SK-N-SH (cell line): ENCODE measurements at regions of chr15 and their contacts with region 1.

Region 1: DNA sequence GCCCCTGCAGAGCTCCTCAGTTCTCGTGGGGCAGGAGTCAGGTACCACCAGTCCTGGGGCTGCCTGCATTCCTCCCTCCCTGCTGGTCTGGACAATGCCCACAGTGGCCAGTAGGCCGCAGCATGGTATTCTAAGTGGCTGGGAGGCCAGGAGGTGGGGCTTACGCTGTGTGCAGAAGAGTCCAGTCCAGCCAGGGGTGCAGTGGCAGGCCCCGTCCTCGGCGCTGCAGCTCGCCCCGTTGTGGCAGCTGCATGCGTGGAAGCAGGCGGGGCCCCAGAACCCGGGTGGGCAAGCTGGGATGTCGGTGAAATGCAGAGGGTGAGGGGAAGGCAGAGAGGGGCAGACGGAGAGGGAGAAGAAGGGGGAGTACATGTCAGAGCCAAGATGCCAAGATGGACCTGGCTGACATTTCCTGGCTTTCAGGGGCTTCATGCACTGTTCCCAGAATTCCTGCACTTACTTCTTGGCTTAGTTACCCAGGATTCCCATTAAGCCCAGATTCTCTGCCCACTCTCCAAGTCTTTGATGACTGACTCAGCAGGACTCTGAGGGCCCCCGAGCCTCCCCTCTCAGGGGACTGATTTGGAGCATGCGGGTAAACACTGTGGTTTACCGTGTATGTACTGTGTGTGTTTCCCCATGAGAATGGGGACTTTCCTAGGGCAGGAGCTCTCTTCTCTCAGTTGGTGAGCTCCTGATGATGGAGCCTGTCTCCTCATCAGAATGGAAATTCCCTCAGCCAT is 47.5 kb downstream of the RAB11A start:
- DNase-seq: peak; percentile 91
- H3K4me3 ChIP-seq: no peak overlapping the region
- H3K27ac ChIP-seq: no peak overlapping the region
- H3K4me1 ChIP-seq: peaks cover 0 to 23% of the 10 kb centered on the region in 2 experiments; a peak in 1 of 4 replicates
- H3K27me3 ChIP-seq: no peaks in the 10 kb centered on the region
- CTCF ChIP-seq: peak; percentile 61
- EP300 ChIP-seq: no peak
- RAD21 ChIP-seq: peak; percentile 97

Region 2: GRCh38 chr15:65833501-65834205 is 83.2 kb before region 1 on chr15:
- CTCF ChIA-PET with region 1: no interaction called
- POLR2A ChIA-PET with region 1: no interaction called
- DNase-seq: peak; percentile 49
- H3K4me3 ChIP-seq: no peak overlapping the region
- H3K27ac ChIP-seq: peak overlapping the region; percentile 66 to 67
- H3K4me1 ChIP-seq: peaks cover 9 to 15% of the 10 kb centered on the region in 2 experiments; a peak in 3 of 4 replicates
- H3K27me3 ChIP-seq: no peaks in the 10 kb centered on the region
- CTCF ChIP-seq: no peak
- EP300 ChIP-seq: no peak
- RAD21 ChIP-seq: peak; percentile 10; the same call in 1 of the 2 replicates

Region 3: DNA sequence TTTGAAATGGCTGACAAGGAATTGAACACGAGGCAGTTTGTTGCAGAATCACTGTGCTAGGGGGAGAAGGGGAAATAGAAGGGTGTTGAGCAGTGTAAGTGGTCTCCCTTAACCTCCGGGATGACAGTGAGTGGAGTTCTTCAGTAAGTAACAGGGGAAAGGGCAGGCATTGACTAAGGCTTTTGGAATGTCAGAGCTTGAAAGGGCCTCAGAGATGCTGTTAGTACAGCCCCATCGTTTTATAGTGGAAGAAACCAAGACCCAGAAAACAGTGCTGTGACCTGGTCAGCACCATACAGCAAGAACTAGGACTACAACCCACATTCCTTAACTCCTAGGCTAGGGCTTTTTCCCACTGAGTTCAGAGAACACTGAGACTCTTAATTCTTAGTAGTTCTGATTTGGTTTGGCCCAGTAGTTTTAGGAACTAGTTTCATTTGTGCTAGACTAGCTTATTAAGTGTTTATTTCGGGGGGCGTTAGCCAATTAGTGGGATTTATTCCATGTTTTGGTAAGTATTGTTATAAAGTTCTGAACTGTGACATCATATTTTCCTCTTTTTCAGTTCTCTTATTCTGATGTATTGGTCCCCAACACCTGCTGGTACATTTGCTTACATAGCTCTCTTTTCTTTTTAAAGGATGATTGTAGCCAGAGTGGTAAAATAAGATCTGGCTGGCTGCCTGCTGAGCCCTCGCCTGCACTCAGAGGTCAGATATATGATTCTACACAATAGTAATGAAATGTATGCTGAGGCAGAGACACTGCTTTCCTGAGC is 13.3 kb before region 1 on chr15:
- CTCF ChIA-PET with region 1: interaction called, 10 read pairs
- POLR2A ChIA-PET with region 1: no interaction called
- DNase-seq: no peak
- H3K4me3 ChIP-seq: no peak overlapping the region
- H3K27ac ChIP-seq: no peak overlapping the region
- H3K4me1 ChIP-seq: no peaks in the 10 kb centered on the region; a peak in 1 of 4 replicates
- H3K27me3 ChIP-seq: no peaks in the 10 kb centered on the region
- CTCF ChIP-seq: no peak
- EP300 ChIP-seq: no peak
- RAD21 ChIP-seq: no peak

Region 4: DNA sequence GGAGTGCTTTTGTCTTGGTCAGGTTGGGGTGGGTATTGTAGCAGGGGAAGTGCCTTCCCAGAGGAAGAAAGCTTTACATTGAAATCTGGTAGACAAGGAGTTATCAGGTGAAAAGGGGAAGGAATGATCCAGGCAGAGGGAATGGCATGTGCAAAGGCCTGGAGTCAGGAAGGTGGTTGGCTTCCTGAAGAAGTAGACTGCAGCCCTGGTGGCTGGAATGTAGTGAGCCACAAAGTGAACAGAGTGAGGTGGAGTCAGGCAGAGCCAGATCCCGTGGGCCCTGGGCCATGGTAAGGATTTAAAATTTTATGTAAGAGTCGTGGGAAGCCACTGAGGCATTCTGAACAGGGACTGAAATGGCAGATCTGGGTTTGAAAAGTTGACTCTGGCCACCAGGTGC is 10.7 kb after region 1 on chr15:
- CTCF ChIA-PET with region 1: interaction called, 23 read pairs
- POLR2A ChIA-PET with region 1: interaction called, 3 read pairs
- DNase-seq: no peak
- H3K4me3 ChIP-seq: no peak overlapping the region
- H3K27ac ChIP-seq: no peak overlapping the region
- H3K4me1 ChIP-seq: no peaks in the 10 kb centered on the region; a peak in 1 of 4 replicates
- H3K27me3 ChIP-seq: no peaks in the 10 kb centered on the region
- CTCF ChIP-seq: peak; percentile 27; the same call in 1 of the 2 replicates
- EP300 ChIP-seq: no peak
- RAD21 ChIP-seq: no peak

Region 5: GRCh38 chr15:65980824-65981456 is 64.1 kb after region 1 on chr15:
- CTCF ChIA-PET with region 1: interaction called, 10 read pairs
- POLR2A ChIA-PET with region 1: no interaction called
- DNase-seq: peak; percentile 66
- H3K4me3 ChIP-seq: no peak overlapping the region; a peak in 1 of 4 replicates
- H3K27ac ChIP-seq: no peak overlapping the region
- H3K4me1 ChIP-seq: peaks cover 0 to 11% of the 10 kb centered on the region in 2 experiments; a peak in 1 of 4 replicates
- H3K27me3 ChIP-seq: no peaks in the 10 kb centered on the region; the same call in 1 of the 2 replicates
- CTCF ChIP-seq: peak; percentile 67
- EP300 ChIP-seq: no peak
- RAD21 ChIP-seq: peak; percentile 73

Region 6: DNA sequence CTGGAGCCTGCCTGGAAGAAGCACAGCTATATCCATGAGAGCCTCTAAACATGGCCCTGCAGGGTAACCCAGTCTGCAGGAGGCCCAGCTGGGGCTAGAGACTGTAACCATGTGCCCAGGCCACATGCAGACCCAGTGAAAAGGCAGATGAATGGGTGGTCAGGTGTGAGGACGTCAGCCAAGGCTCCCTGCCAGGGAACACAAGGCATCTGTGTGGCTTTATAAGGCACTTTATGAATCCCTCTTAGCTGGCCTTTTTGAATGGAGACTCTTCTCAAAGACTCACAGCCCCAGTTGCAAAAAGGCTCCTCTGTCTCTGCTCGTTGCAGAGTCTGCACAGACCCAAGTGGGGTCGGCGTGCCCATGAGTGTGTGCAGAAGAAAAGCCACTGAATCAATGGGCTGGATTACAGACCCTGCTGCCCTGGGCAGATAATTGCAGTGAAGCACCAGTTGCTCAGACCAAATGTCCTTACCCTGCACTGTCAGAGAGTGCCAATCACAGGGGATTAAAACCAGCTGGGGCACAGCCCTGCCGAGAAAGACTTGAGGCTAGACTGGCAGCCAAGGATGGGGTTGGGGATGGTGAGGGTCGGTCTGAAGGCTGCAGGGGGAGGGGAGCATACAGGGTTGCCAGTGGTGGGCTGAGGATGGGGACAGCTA is 106.6 kb after region 1 on chr15:
- CTCF ChIA-PET with region 1: interaction called, 10 read pairs
- POLR2A ChIA-PET with region 1: no interaction called
- DNase-seq: peak; percentile 64
- H3K4me3 ChIP-seq: no peak overlapping the region
- H3K27ac ChIP-seq: peak overlapping the region in 1 of 2 experiments; percentile 76; a peak in 2 of 4 replicates
- H3K4me1 ChIP-seq: peaks cover 0 to 52% of the 10 kb centered on the region in 2 experiments; a peak in 2 of 4 replicates
- H3K27me3 ChIP-seq: peaks cover 5% of the 10 kb centered on the region; the same call in 1 of the 2 replicates
- CTCF ChIP-seq: no peak
- EP300 ChIP-seq: peak in 1 of 2 experiments; percentile 20; a peak in 1 of 4 replicates
- RAD21 ChIP-seq: 0 out of 2 replicates have a peak, but pooled peaks have one; percentile 7

Region 7: GRCh38 chr15:66153549-66154415 is 236.9 kb after region 1 on chr15:
- CTCF ChIA-PET with region 1: interaction called, 17 read pairs
- POLR2A ChIA-PET with region 1: no interaction called
- DNase-seq: no peak
- H3K4me3 ChIP-seq: no peak overlapping the region
- H3K27ac ChIP-seq: no peak overlapping the region
- H3K4me1 ChIP-seq: peaks cover 0 to 24% of the 10 kb centered on the region in 2 experiments; a peak in 1 of 4 replicates
- H3K27me3 ChIP-seq: peaks cover 17% of the 10 kb centered on the region
- CTCF ChIP-seq: no peak
- EP300 ChIP-seq: no peak
- RAD21 ChIP-seq: no peak

Region 8: GRCh38 chr15:66287461-66288057 is 370.7 kb after region 1 on chr15:
- CTCF ChIA-PET with region 1: interaction called, 40 read pairs
- POLR2A ChIA-PET with region 1: no interaction called
- DNase-seq: peak; percentile 41
- H3K4me3 ChIP-seq: no peak overlapping the region
- H3K27ac ChIP-seq: no peak overlapping the region
- H3K4me1 ChIP-seq: peaks cover 12 to 14% of the 10 kb centered on the region in 2 experiments; a peak in 3 of 4 replicates
- H3K27me3 ChIP-seq: no peaks in the 10 kb centered on the region
- CTCF ChIP-seq: peak; percentile 73
- EP300 ChIP-seq: no peak
- RAD21 ChIP-seq: peak; percentile 72

Region 9: GRCh38 chr15:67010898-67011616 is 1094.2 kb after region 1 on chr15:
- CTCF ChIA-PET with region 1: no interaction called
- POLR2A ChIA-PET with region 1: no interaction called
- DNase-seq: no peak
- H3K4me3 ChIP-seq: no peak overlapping the region
- H3K27ac ChIP-seq: no peak overlapping the region
- H3K4me1 ChIP-seq: peaks cover 0 to 6% of the 10 kb centered on the region in 2 experiments; a peak in 1 of 4 replicates
- H3K27me3 ChIP-seq: no peaks in the 10 kb centered on the region
- CTCF ChIP-seq: no peak
- EP300 ChIP-seq: no peak
- RAD21 ChIP-seq: no peak